ENCODE measurements at regions of chr11 and their contacts with region 1.

Region 1: GRCh38 chr11:2532704-2533586 is 88.1 kb downstream of the KCNQ1 start:
- DNase-seq: peak; percentile 85 to 97 (median 92)
- ATAC-seq: peak; percentile 86
- H3K4me3 ChIP-seq: peak overlapping the region; percentile 18 to 28
- H3K4me3 Mint-ChIP-seq: peak overlapping the region; percentile 76
- H3K27ac ChIP-seq: no peak overlapping the region
- H3K27ac Mint-ChIP-seq: no peak overlapping the region
- H3K4me1 ChIP-seq: peaks cover 19% of the 10 kb centered on the region
- H3K4me1 Mint-ChIP-seq: peaks cover 20% of the 10 kb centered on the region
- H3K27me3 ChIP-seq: no peaks in the 10 kb centered on the region
- H3K27me3 Mint-ChIP-seq: no peaks in the 10 kb centered on the region
- CTCF ChIP-seq: peak; percentile 94

Region 2: GRCh38 chr11:2196970-2197770 is 335.8 kb before region 1 on chr11:
- CTCF ChIA-PET with region 1: interaction called, 13 read pairs
- POLR2A ChIA-PET with region 1: no interaction called
- intact Hi-C with region 1: no loop called
- DNase-seq: peak; percentile 51 to 87 (median 73)
- ATAC-seq: peak; percentile 93
- H3K4me3 ChIP-seq: no peak overlapping the region
- H3K4me3 Mint-ChIP-seq: no peak overlapping the region
- H3K27ac ChIP-seq: no peak overlapping the region
- H3K27ac Mint-ChIP-seq: no peak overlapping the region
- H3K4me1 ChIP-seq: peaks cover 14% of the 10 kb centered on the region
- H3K4me1 Mint-ChIP-seq: peaks cover 12% of the 10 kb centered on the region
- H3K27me3 ChIP-seq: peaks cover 0 to 3% of the 10 kb centered on the region in 2 experiments
- H3K27me3 Mint-ChIP-seq: peaks cover 6% of the 10 kb centered on the region
- CTCF ChIP-seq: peak; percentile 57

Region 3: DNA sequence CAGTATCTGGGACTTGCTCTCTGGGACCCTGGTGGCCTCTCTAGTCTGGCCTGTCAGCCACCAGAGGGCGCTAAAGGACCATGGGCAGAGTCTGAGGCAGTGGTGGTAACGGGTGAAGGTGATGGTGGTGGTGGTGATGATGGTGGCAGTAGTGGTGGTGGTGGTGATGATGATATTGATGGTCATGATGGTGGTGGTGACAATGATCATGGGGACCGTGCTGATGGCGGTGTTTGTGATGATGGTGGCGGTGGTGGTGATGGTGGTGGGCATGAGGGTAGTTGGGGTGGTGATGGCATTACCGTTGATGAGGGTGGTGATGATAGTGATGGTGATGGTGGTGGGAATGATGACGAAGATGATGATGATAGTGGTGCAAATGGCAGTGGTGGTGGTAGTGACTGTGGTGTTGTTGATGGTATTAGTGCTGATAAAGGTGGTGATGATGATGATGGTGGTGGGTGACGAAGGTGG is 104.6 kb before region 1 on chr11:
- CTCF ChIA-PET with region 1: interaction called, 292 read pairs
- POLR2A ChIA-PET with region 1: no interaction called
- intact Hi-C with region 1: loop called in 1 of 2 experiments (anchors 1 kb)
- DNase-seq: peak; percentile 75 to 94 (median 87)
- ATAC-seq: peak; percentile 91
- H3K4me3 ChIP-seq: no peak overlapping the region
- H3K4me3 Mint-ChIP-seq: no peak overlapping the region
- H3K27ac ChIP-seq: no peak overlapping the region
- H3K27ac Mint-ChIP-seq: no peak overlapping the region
- H3K4me1 ChIP-seq: no peaks in the 10 kb centered on the region
- H3K4me1 Mint-ChIP-seq: no peaks in the 10 kb centered on the region
- H3K27me3 ChIP-seq: no peaks in the 10 kb centered on the region
- H3K27me3 Mint-ChIP-seq: no peaks in the 10 kb centered on the region
- CTCF ChIP-seq: peak; percentile 70

Region 4: GRCh38 chr11:2474061-2474901 is 58.7 kb before region 1 on chr11:
- CTCF ChIA-PET with region 1: interaction called, 41 read pairs
- POLR2A ChIA-PET with region 1: no interaction called
- intact Hi-C with region 1: no loop called
- DNase-seq: no peak
- ATAC-seq: no peak
- H3K4me3 ChIP-seq: no peak overlapping the region
- H3K4me3 Mint-ChIP-seq: no peak overlapping the region
- H3K27ac ChIP-seq: no peak overlapping the region
- H3K27ac Mint-ChIP-seq: no peak overlapping the region
- H3K4me1 ChIP-seq: peaks cover 4% of the 10 kb centered on the region
- H3K4me1 Mint-ChIP-seq: peaks cover 31% of the 10 kb centered on the region
- H3K27me3 ChIP-seq: peaks cover 0 to 5% of the 10 kb centered on the region in 2 experiments
- H3K27me3 Mint-ChIP-seq: no peaks in the 10 kb centered on the region
- CTCF ChIP-seq: no peak

Region 5: GRCh38 chr11:2885676-2886081 is 352.7 kb after region 1 on chr11 and contains the start of gene CDKN1C:
- CTCF ChIA-PET with region 1: interaction called, 492 read pairs
- POLR2A ChIA-PET with region 1: interaction called, 31 read pairs
- intact Hi-C with region 1: loop called (anchors 1 kb)
- DNase-seq: peak; percentile 65 to 91 (median 84)
- ATAC-seq: peak; percentile 91
- H3K4me3 ChIP-seq: peak within 1 kb of the TSS; percentile 74 to 89
- H3K4me3 Mint-ChIP-seq: peak within 1 kb of the TSS; percentile 93
- H3K27ac ChIP-seq: peak within 1 kb of the TSS in 1 of 2 experiments; percentile 31
- H3K27ac Mint-ChIP-seq: peak within 1 kb of the TSS; percentile 60
- H3K4me1 ChIP-seq: peaks cover 16% of the 10 kb centered on the region
- H3K4me1 Mint-ChIP-seq: peaks cover 19% of the 10 kb centered on the region
- H3K27me3 ChIP-seq: no peaks in the 10 kb centered on the region
- H3K27me3 Mint-ChIP-seq: no peaks in the 10 kb centered on the region
- CTCF ChIP-seq: no peak
- total RNA-seq, gene CDKN1C: 2.5 to 3.6 TPM

Region 6: DNA sequence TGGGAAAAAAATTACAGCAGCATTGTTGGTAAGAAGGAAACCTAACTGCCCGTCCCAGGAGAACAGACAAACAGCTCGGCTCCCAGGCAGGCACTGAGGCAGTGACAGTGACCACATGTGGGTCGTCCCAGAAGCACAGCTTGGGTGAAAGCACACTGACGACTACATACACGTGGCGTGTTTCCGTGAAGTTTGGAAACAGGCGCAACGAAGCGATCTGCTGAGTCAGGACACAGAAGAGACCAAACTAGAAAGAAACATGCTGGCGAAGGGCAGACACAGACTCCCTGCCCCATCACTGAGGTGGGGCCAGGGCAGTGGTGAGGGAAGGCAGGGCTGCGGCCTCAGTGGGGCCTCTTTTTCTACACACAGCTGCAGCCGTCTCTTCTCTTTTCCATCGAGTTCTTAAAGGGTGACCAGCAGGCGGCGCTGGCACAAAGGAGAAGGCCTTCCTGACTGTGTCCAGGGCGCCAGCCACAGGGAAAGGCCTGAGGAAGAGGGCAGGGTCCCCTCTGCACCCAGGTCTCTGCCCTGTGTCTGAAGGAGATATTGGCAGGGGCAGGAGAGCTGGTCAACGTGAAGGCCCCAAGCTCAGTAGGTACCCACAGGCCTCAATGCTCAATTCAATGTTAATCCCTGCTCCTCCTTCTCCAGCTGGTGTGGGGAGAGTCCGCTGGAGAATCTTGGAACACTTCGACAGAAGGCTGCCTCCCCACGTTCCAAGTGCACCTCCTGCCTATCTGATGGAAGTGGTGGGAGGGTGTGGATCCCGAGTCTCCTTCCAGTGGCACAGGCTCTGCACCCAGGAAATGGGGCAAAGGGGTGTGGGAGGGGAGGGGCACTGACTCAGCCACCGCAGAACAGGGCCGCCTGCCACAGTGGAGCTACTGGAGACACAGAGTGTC is 504.3 kb after region 1 on chr11:
- CTCF ChIA-PET with region 1: no interaction called
- POLR2A ChIA-PET with region 1: no interaction called
- intact Hi-C with region 1: loop called in 1 of 2 experiments (anchors 5 kb)
- DNase-seq: peak in 8 of 9 experiments; percentile 18 to 66 (median 48)
- ATAC-seq: peak; percentile 84
- H3K4me3 ChIP-seq: no peak overlapping the region
- H3K4me3 Mint-ChIP-seq: no peak overlapping the region
- H3K27ac ChIP-seq: no peak overlapping the region
- H3K27ac Mint-ChIP-seq: no peak overlapping the region
- H3K4me1 ChIP-seq: peaks cover 6% of the 10 kb centered on the region
- H3K4me1 Mint-ChIP-seq: peaks cover 12% of the 10 kb centered on the region
- H3K27me3 ChIP-seq: no peaks in the 10 kb centered on the region
- H3K27me3 Mint-ChIP-seq: no peaks in the 10 kb centered on the region
- CTCF ChIP-seq: peak; percentile 30